ENCODE measurements at regions of chr1 and their contacts with region 1.

Region 1: DNA sequence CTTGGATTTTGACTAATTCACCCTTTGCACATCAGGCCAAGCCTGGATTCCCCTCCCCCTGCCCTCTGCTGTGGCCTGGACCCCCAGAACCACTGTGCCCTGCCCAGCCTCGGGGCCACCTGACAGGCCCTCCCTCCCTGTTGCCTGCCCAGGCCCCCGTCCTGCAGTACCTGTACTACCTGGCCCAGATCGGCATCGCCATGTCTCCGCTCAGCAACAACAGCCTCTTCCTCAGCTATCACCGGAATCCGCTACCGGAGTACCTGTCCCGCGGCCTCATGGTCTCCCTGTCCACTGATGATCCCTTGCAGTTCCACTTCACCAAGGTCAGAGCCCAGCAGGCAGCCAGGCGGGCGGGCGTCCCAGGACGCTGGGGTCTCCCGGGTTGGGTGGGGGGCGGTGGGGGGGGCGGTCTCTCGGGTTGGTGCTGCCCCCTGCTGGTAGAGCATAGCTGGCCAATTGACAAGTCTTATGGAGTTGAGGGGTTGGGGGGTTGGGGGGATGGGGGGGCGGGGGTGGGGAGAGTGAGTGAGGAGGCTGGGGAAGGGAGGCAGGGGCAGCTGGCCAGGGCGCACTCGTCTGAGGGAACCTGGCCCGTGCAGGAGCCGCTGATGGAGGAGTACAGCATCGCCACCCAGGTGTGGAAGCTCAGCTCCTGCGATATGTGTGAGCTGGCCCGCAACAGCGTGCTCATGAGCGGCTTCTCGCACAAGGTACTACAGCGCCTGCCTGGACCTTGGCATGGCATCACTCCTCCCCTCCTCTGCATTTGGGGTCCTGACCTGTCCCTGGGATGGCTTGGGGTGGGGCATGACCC is 10.7 kb downstream of the AMPD2 start:
- DNase-seq: no peak
- H3K4me3 ChIP-seq: no peak overlapping the region
- H3K27ac ChIP-seq: peak overlapping the region in 1 of 5 donors; percentile 78
- H3K4me1 ChIP-seq: peaks cover 0 to 43% (median 22%) of the 10 kb centered on the region in 4 donors
- H3K27me3 ChIP-seq: no peaks in the 10 kb centered on the region
- CTCF ChIP-seq: peak in 3 of 7 experiments; percentile 9 to 52 (median 30)
- EP300 ChIP-seq: no peak
- POLR2A ChIP-seq: no peak

Region 2: DNA sequence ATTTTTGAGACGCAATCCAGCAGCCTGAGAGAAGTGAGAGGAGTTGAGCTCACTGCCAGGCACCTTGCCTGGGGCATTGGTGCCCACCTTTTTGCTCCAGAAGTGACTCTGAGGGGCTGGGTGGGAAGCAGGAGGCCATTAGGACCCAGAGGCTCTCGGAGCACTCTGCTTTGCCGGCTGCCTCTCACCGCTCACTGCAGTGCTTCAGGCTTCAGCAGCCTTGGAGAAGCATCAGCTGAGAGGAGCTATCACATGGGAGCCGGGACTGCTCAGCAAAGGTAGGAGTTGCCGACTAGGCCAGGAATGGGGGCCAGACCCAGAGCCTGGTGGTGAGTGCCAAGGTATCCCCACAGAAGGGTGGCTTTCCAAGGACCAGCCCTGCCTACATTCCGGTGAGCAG is 90.6 kb before region 1 on chr1 and contains the start of gene GPR61:
- intact Hi-C with region 1: loop called (anchors 5 kb)
- DNase-seq: no peak
- H3K4me3 ChIP-seq: no peak within 1 kb of the TSS
- H3K27ac ChIP-seq: no peak within 1 kb of the TSS
- H3K4me1 ChIP-seq: peaks cover 0 to 13% (median 3%) of the 10 kb centered on the region in 4 donors
- H3K27me3 ChIP-seq: no peaks in the 10 kb centered on the region
- CTCF ChIP-seq: no peak
- EP300 ChIP-seq: no peak
- POLR2A ChIP-seq: no peak
- total RNA-seq, gene GPR61: not detected

Region 3: DNA sequence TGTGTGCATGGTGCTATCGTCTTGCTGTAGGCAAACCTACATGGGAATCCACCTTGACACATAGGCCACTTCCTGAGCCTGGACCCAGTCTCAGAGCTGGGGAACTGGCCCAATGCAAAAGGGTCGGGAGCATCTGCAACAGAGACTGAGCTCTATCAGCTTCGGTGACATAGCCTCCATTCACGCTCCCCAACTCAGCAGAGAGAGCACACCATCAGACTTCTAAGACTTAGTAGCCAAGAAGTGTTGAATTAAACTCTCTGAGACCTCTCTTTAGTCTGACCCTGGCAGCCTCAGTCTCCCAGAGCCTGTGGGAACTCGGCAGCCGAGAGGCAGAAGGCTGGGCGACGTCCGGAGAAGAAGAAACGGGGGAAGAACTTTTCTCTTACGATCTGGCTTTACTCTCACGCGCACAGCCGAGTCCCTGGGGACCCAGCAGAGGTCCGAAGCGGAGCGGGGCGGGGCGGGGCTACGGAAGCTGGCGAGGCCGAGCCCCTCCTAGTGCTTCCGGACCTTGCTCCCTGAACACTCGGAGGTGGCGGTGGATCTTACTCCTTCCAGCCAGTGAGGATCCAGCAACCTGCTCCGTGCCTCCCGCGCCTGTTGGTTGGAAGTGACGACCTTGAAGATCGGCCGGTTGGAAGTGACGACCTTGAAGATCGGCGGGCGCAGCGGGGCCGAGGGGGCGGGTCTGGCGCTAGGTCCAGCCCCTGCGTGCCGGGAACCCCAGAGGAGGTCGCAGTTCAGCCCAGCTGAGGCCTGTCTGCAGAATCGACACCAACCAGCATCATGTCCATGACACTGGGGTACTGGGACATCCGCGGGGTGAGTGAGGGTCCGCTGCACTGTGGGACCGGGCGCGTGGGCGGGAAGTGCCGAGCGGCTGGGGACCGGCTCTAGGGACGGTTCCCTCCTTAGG is 25.6 kb after region 1 on chr1 and contains the start of gene GSTM4:
- intact Hi-C with region 1: no loop called
- DNase-seq: peak; percentile 88 to 95
- H3K4me3 ChIP-seq: peak within 1 kb of the TSS; percentile 55 to 79 (median 64)
- H3K27ac ChIP-seq: peak within 1 kb of the TSS; percentile 76 to 87 (median 80)
- H3K4me1 ChIP-seq: peaks cover 12 to 40% (median 20%) of the 10 kb centered on the region in 4 donors
- H3K27me3 ChIP-seq: no peaks in the 10 kb centered on the region
- CTCF ChIP-seq: no peak
- EP300 ChIP-seq: no peak
- POLR2A ChIP-seq: no peak
- total RNA-seq, gene GSTM4: 7.5 to 63.6 (median 22.3) TPM

Measured in stomach (tissue), 19 donors.